ENCODE measurements at regions of chr3 and their contacts with region 1.

Region 1: DNA sequence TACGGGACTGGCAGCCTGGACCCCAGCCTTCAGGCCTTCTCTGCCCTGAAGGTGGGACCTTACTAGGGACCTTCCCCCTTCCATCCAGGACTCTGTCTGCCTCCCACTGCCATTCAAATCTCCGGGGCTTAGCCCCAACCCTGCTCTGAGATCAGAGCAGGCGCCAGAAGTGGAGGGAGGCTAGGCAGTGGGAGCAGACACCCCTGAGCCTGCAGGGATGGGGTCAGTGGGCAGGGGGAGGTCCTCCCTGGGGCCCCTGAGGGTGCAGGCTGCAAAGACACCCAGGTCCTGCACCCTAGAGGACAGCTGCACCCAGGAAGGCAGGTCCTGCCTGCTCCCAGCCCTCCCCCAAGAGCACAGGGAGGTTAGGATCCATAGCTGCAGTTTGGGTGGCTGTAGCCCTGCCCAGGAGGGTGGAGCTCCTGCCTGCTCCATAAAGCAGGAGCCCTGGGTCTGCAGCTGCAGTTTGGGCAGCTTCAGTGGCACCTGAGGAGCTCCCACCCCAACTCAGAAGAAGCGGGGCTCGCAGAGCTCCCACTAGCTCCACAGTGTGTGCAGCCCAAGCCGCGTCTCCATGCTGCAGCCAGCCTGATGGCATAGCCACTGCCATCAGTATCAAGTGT is 8.1 kb upstream of the POC1A start:
- DNase-seq: no peak
- ATAC-seq: no peak
- H3K4me3 ChIP-seq: no peak overlapping the region
- H3K27ac ChIP-seq: no peak overlapping the region
- H3K4me1 ChIP-seq: no peaks in the 10 kb centered on the region
- H3K27me3 ChIP-seq: no peaks in the 10 kb centered on the region
- CTCF ChIP-seq: no peak

Region 2: GRCh38 chr3:51995346-51996163 is 166.8 kb before region 1 on chr3 and contains the start of gene RPL29:
- CTCF ChIA-PET with region 1: no interaction called
- POLR2A ChIA-PET with region 1: no interaction called
- in situ Hi-C with region 1: no loop called
- intact Hi-C with region 1: no loop called
- DNase-seq: peak; percentile 82
- ATAC-seq: peak; percentile 92
- H3K4me3 ChIP-seq: peak within 1 kb of the TSS; percentile 91 to 96
- H3K27ac ChIP-seq: peak within 1 kb of the TSS; percentile 81
- H3K4me1 ChIP-seq: peaks cover 18% of the 10 kb centered on the region
- H3K27me3 ChIP-seq: no peaks in the 10 kb centered on the region
- CTCF ChIP-seq: no peak
- total RNA-seq, gene RPL29: 696 TPM

Region 3: DNA sequence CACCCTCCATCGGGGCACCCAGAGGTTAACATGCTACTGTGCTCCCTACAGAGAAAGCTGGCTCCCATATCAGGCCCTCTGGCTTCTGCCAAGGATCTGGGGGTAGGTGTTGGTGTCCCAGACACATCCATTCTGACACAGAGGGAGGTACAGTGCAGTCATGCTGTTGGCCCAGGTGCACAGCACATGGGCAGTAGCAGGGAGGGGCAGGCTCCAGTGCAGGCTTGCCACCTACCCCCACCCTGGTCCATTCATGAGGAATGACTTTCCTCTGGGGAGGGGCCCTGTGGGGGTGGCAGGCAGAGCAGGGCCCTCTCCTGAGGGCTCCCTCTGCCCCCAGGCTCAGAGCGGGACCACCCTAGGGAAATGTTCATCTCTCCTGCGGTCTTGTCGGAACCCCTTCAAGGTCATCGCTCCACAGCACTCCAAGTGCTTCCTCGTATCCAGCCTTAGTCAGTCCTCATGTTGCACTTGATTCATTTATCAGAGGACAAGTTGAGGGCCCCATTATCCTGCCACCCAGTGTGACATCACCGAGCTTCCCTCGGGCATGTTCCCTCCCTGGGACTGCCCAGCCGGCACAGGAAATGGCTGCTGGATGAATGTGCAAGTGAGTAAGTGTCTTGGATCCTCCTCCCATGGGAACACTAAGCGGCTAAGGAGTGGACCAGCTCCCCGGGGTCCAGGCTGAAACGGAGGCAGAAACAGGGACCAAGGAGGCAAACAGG is 116.0 kb before region 1 on chr3:
- CTCF ChIA-PET with region 1: no interaction called
- POLR2A ChIA-PET with region 1: no interaction called
- in situ Hi-C with region 1: loop called (anchors 10 kb)
- intact Hi-C with region 1: no loop called
- DNase-seq: no peak
- ATAC-seq: peak; percentile 87
- H3K4me3 ChIP-seq: no peak overlapping the region
- H3K27ac ChIP-seq: peak overlapping the region; percentile 61
- H3K4me1 ChIP-seq: peaks cover 21% of the 10 kb centered on the region
- H3K27me3 ChIP-seq: no peaks in the 10 kb centered on the region
- CTCF ChIP-seq: no peak

Region 4: GRCh38 chr3:52056968-52057805 is 105.2 kb before region 1 on chr3:
- CTCF ChIA-PET with region 1: no interaction called
- POLR2A ChIA-PET with region 1: no interaction called
- in situ Hi-C with region 1: no loop called
- intact Hi-C with region 1: no loop called
- DNase-seq: peak; percentile 83
- ATAC-seq: peak; percentile 89
- H3K4me3 ChIP-seq: peak overlapping the region; percentile 55 to 60
- H3K27ac ChIP-seq: peak overlapping the region; percentile 83
- H3K4me1 ChIP-seq: peaks cover 11% of the 10 kb centered on the region
- H3K27me3 ChIP-seq: no peaks in the 10 kb centered on the region
- CTCF ChIP-seq: no peak